ENCODE measurements at regions of chr13 and their contacts with region 1.

Region 1: GRCh38 chr13:38914070-38914469 is 76.6 kb downstream of the STOML3 start:
- DNase-seq: peak in 1 of 2 experiments; percentile 25
- H3K4me3 ChIP-seq: no peak overlapping the region
- H3K27ac ChIP-seq: no peak overlapping the region
- H3K4me1 ChIP-seq: no peaks in the 10 kb centered on the region
- H3K27me3 ChIP-seq: no peaks in the 10 kb centered on the region
- CTCF ChIP-seq: no peak

Region 2: GRCh38 chr13:37074703-37075102 is 1839.4 kb before region 1 on chr13:
- CTCF ChIA-PET with region 1: no interaction called
- POLR2A ChIA-PET with region 1: no interaction called
- intact Hi-C with region 1: loop called (anchors 2 kb)
- DNase-seq: no peak
- H3K4me3 ChIP-seq: no peak overlapping the region
- H3K27ac ChIP-seq: no peak overlapping the region
- H3K4me1 ChIP-seq: no peaks in the 10 kb centered on the region
- H3K27me3 ChIP-seq: no peaks in the 10 kb centered on the region
- CTCF ChIP-seq: peak; percentile 70

Region 3: GRCh38 chr13:37769078-37769477 is 1145.0 kb before region 1 on chr13:
- CTCF ChIA-PET with region 1: no interaction called
- POLR2A ChIA-PET with region 1: no interaction called
- intact Hi-C with region 1: loop called (anchors 10 kb)
- DNase-seq: no peak
- H3K4me3 ChIP-seq: no peak overlapping the region
- H3K27ac ChIP-seq: no peak overlapping the region
- H3K4me1 ChIP-seq: no peaks in the 10 kb centered on the region
- H3K27me3 ChIP-seq: no peaks in the 10 kb centered on the region
- CTCF ChIP-seq: peak; percentile 59

Region 4: DNA sequence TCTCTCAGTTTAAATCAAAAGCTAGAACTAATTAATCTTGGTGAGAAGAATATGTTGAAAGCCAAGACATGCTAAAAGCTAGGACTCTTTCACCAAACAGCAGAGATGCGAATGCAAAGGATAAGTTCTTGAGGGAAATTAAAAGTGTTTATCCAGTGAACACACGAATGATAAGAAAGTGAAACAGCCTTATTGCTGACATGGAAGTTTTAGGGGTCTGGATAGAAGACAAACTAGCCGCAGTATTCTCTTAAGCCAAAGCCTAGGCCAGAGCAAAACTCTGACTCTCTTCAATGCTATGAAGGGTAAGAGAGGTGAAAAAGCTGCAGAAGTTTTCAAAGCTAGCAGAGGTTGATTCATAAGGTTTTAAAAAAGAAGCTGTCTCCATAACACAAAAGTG is 461.4 kb before region 1 on chr13:
- CTCF ChIA-PET with region 1: no interaction called
- POLR2A ChIA-PET with region 1: no interaction called
- intact Hi-C with region 1: no loop called
- DNase-seq: no peak
- H3K4me3 ChIP-seq: no peak overlapping the region
- H3K27ac ChIP-seq: no peak overlapping the region
- H3K4me1 ChIP-seq: no peaks in the 10 kb centered on the region
- H3K27me3 ChIP-seq: no peaks in the 10 kb centered on the region
- CTCF ChIP-seq: no peak

Region 5: GRCh38 chr13:38763439-38764381 is 150.4 kb before region 1 on chr13:
- CTCF ChIA-PET with region 1: interaction called, 3 read pairs
- POLR2A ChIA-PET with region 1: no interaction called
- intact Hi-C with region 1: loop called (anchors 10 kb)
- DNase-seq: peak in 1 of 2 experiments; percentile 38
- H3K4me3 ChIP-seq: no peak overlapping the region
- H3K27ac ChIP-seq: no peak overlapping the region
- H3K4me1 ChIP-seq: 0 out of 2 replicates have a peak, but pooled peaks cover 7% of the 10 kb centered on the region
- H3K27me3 ChIP-seq: no peaks in the 10 kb centered on the region
- CTCF ChIP-seq: peak; percentile 65

Region 6: DNA sequence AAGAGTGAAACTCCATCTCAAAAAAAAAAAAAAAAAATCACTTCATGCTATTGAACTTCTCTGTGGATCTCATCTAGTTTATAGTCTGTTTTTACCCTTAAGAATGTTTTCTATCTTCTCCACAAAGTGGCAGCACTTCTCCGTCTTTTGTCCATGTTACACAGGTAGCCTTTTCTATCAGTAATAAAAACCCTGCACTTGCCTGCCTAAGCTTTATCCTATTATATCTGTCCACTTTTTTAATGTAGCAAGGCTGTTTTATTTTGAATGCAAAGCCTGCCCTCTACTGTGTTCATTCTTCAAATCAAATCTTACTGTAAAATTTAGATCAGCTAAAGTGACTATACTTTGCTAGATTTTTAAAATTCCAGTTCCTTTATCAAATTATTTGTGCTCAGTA is 47.4 kb before region 1 on chr13:
- CTCF ChIA-PET with region 1: interaction called, 3 read pairs
- POLR2A ChIA-PET with region 1: no interaction called
- intact Hi-C with region 1: loop called (anchors 1 kb)
- DNase-seq: no peak
- H3K4me3 ChIP-seq: no peak overlapping the region
- H3K27ac ChIP-seq: no peak overlapping the region
- H3K4me1 ChIP-seq: no peaks in the 10 kb centered on the region
- H3K27me3 ChIP-seq: no peaks in the 10 kb centered on the region
- CTCF ChIP-seq: no peak